Mammary epithelial cell (primary cell): ENCODE measurements at regions of chr18 and their contacts with region 1.

Region 1: GRCh38 chr18:58967751-58968254 is 103.1 kb downstream of the ZNF532 start:
- DNase-seq: no peak
- H3K4me3 ChIP-seq: no peak overlapping the region
- H3K27ac ChIP-seq: no peak overlapping the region
- H3K4me1 ChIP-seq: no peaks in the 10 kb centered on the region
- H3K27me3 ChIP-seq: no peaks in the 10 kb centered on the region
- CTCF ChIP-seq: no peak

Region 2: GRCh38 chr18:58934356-58934755 is 33.4 kb before region 1 on chr18:
- CTCF ChIA-PET with region 1: no interaction called
- dilution Hi-C with region 1: loop called (anchors 5 kb)
- in situ Hi-C with region 1: no loop called
- intact Hi-C with region 1: no loop called
- DNase-seq: no peak
- H3K4me3 ChIP-seq: no peak overlapping the region
- H3K27ac ChIP-seq: no peak overlapping the region
- H3K4me1 ChIP-seq: peaks cover 9% of the 10 kb centered on the region
- H3K27me3 ChIP-seq: no peaks in the 10 kb centered on the region
- CTCF ChIP-seq: no peak

Region 3: GRCh38 chr18:59340817-59341216 is 373.0 kb after region 1 on chr18:
- CTCF ChIA-PET with region 1: no interaction called
- dilution Hi-C with region 1: no loop called
- in situ Hi-C with region 1: no loop called
- intact Hi-C with region 1: no loop called
- DNase-seq: no peak
- H3K4me3 ChIP-seq: no peak overlapping the region
- H3K27ac ChIP-seq: no peak overlapping the region
- H3K4me1 ChIP-seq: no peaks in the 10 kb centered on the region
- H3K27me3 ChIP-seq: no peaks in the 10 kb centered on the region
- CTCF ChIP-seq: no peak